GM12878 (cell line): ENCODE measurements at regions of chr4 and their contacts with region 1.

Region 1: GRCh38 chr4:64158648-64159326 is 250.5 kb downstream of the TECRL start:
- DNase-seq: peak; percentile 19
- ATAC-seq: peak; percentile 88
- H3K4me3 ChIP-seq: no peak overlapping the region
- H3K27ac ChIP-seq: no peak overlapping the region
- H3K4me1 ChIP-seq: no peaks in the 10 kb centered on the region
- H3K27me3 ChIP-seq: no peaks in the 10 kb centered on the region
- CTCF ChIP-seq: peak; percentile 75 to 81 (median 77)
- EP300 ChIP-seq: no peak
- POLR2A ChIP-seq: no peak
- RAD21 ChIP-seq: peak; percentile 77

Region 2: GRCh38 chr4:64016542-64017292 is 142.1 kb before region 1 on chr4:
- CTCF ChIA-PET with region 1: no interaction called
- POLR2A ChIA-PET with region 1: no interaction called
- RAD21 ChIA-PET with region 1: no interaction called
- SMC1A ChIA-PET with region 1: no interaction called
- in situ Hi-C with region 1: no loop called
- intact Hi-C with region 1: no loop called
- DNase-seq: no peak
- ATAC-seq: no peak
- H3K4me3 ChIP-seq: no peak overlapping the region
- H3K27ac ChIP-seq: no peak overlapping the region
- H3K4me1 ChIP-seq: no peaks in the 10 kb centered on the region
- H3K27me3 ChIP-seq: no peaks in the 10 kb centered on the region
- CTCF ChIP-seq: no peak
- EP300 ChIP-seq: no peak
- POLR2A ChIP-seq: no peak
- RAD21 ChIP-seq: no peak

Region 3: GRCh38 chr4:64266669-64267068 is 107.9 kb after region 1 on chr4:
- CTCF ChIA-PET with region 1: no interaction called
- POLR2A ChIA-PET with region 1: no interaction called
- RAD21 ChIA-PET with region 1: no interaction called
- SMC1A ChIA-PET with region 1: no interaction called
- in situ Hi-C with region 1: no loop called
- intact Hi-C with region 1: loop called (anchors 5 kb)
- DNase-seq: no peak
- ATAC-seq: no peak
- H3K4me3 ChIP-seq: no peak overlapping the region
- H3K27ac ChIP-seq: no peak overlapping the region
- H3K4me1 ChIP-seq: no peaks in the 10 kb centered on the region
- H3K27me3 ChIP-seq: no peaks in the 10 kb centered on the region
- CTCF ChIP-seq: no peak
- EP300 ChIP-seq: no peak
- POLR2A ChIP-seq: no peak
- RAD21 ChIP-seq: no peak